ENCODE measurements at regions of chr18 and their contacts with region 1.

Region 1: GRCh38 chr18:50786864-50787263 is 33.0 kb downstream of the MRO start:
- DNase-seq: no peak
- ATAC-seq: no peak

Region 2: GRCh38 chr18:50507120-50507590 is 279.7 kb before region 1 on chr18:
- intact Hi-C with region 1: loop called (anchors 1 kb)
- DNase-seq: no peak
- ATAC-seq: peak; percentile 82

Region 3: DNA sequence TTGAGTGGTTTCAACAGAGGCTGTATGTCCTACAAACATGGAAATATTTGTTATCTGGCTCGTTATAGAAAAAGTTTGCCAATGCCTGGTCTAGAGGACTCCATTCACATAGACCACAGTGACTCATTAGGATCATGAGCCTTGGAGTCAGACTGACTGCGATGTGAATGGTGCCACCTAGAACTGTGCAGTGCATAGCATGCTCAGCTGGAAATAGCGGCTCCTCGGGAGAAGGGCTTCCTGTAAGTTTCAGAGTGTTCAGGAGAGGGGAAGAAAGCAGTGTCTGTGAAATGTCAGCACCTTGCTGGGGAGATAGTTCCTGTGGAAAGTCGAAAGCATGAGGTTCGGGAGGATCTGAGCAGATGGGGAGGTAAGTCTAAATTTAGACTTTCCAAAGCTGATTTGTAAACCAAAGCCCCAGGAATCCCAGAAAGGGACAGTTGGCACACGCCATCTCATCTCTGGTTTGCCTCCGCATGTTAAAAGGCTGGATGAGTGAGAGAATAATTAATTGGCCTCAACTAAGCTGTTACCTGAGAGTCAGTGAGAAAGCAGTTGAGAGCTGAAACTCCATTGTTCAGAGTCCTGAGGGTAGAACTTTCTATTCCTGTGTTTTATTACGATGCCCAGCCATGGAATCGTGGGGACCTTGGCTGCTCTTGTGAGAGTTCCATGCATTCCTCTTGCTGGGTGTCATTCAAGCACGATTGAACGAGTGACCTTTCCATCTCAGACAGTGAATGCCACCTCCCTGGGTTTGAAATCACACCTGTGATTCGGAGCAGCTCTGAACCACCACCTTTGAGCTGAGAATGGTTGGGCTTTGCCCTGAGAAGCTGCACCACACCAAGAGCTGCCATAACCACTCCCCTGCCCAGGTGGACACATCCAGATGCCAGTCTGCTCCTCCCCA is 127.5 kb before region 1 on chr18:
- intact Hi-C with region 1: loop called (anchors 10 kb)
- DNase-seq: no peak
- ATAC-seq: peak; percentile 69

Region 4: GRCh38 chr18:50775222-50775621 is 11.6 kb before region 1 on chr18:
- intact Hi-C with region 1: no loop called
- DNase-seq: no peak
- ATAC-seq: no peak

Measured in Right ventricle myocardium inferior (tissue), 1 donor.